Activated naive CD8-positive, alpha-beta T cell treated with anti-CD3 and anti-CD28 coated beads, Interleukin-2, amount 10 ng/mL, durations not matched to agents 7 days and 5 days (primary cell): ENCODE measurements at regions of chr1 and their contacts with region 1.

Region 1: GRCh38 chr1:208245185-208245705 is 1.1 kb upstream of the PLXNA2 start:
- DNase-seq: peak; percentile 73
- ATAC-seq: peak; percentile 66
- H3K4me3 Mint-ChIP-seq: peak overlapping the region; percentile 80
- H3K27ac Mint-ChIP-seq: no peak overlapping the region
- H3K4me1 Mint-ChIP-seq: peaks cover 12% of the 10 kb centered on the region
- H3K27me3 Mint-ChIP-seq: peaks cover 45% of the 10 kb centered on the region

Region 2: DNA sequence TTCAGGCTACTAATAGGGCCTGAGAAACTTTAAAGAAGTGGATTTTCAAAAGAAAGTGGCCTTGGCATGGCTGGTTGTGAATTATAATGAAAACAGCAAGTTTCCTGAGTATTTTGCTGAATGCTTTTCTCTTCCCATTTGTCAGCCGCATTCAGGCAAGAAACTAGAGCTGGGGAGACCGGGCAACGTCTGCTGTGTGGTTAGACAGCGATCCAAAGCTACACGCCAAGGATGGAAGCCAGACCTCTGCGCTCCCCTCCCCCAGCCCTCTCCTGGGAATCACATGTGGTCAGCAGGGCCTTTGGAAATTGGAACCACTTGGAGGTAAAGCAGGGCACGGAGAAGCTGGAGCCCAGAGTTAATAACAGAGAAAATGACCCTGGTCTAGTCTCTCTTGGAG is 220.2 kb before region 1 on chr1:
- POLR2A ChIA-PET with region 1: interaction called, 10 read pairs
- DNase-seq: no peak
- ATAC-seq: no peak
- H3K4me3 Mint-ChIP-seq: no peak overlapping the region
- H3K27ac Mint-ChIP-seq: no peak overlapping the region
- H3K4me1 Mint-ChIP-seq: no peaks in the 10 kb centered on the region
- H3K27me3 Mint-ChIP-seq: peaks cover 3% of the 10 kb centered on the region